A549 (cell line): ENCODE measurements at regions of chr17 and their contacts with region 1.

Region 1: DNA sequence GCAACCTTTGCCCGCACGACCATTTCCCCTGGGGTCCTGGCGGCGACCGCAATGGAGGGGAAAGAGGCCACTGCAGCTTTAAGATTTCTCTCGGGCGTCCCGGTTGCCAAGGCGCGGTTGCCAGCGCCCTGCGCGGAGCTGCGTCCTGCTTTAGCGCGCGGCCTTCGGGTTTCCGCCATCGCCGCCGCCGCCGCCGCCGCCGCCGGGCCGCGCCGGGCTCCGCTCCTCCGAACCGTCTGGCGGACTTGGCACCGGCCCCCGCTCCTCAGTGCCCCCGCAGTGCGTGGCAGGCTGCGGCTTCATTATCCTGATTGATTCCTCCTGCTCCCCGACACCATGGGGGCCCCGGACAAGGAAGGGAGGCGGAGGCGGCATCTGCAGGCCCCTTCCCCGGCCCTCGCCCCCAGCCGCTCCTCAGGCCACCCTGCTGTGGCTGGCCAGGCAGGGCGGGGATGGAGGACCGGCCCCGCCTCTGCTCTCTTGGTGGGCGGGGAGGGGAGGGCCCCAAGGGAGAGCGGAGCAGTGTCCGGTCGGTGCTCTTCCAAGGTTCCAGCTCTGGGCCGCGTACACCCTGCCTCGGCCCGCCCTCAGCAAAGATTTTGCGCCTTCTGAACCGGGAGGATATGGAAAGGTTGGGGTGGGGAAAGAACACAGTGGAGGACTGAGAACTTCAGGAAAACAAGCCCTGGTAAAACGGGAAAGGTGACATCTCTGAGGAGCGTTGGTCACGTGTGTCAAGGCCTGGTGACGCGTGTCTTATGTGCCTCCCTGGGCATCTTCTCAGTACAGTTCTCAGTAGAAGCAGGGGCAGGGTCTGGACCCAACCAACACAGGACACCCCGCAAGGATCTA is 34.0 kb downstream of the NEUROD2 start:
- DNase-seq: peak; percentile 81 to 95
- ATAC-seq: peak; percentile 91 to 96
- H3K4me3 ChIP-seq: peak overlapping the region; percentile 57
- H3K27ac ChIP-seq: peak overlapping the region; percentile 74 to 90
- H3K4me1 ChIP-seq: peaks cover 5% of the 10 kb centered on the region; the same call in 2 of the 3 replicates
- CTCF ChIP-seq: no peak
- EP300 ChIP-seq: no peak
- POLR2A ChIP-seq: peak; percentile 44
- RAD21 ChIP-seq: no peak

Region 2: DNA sequence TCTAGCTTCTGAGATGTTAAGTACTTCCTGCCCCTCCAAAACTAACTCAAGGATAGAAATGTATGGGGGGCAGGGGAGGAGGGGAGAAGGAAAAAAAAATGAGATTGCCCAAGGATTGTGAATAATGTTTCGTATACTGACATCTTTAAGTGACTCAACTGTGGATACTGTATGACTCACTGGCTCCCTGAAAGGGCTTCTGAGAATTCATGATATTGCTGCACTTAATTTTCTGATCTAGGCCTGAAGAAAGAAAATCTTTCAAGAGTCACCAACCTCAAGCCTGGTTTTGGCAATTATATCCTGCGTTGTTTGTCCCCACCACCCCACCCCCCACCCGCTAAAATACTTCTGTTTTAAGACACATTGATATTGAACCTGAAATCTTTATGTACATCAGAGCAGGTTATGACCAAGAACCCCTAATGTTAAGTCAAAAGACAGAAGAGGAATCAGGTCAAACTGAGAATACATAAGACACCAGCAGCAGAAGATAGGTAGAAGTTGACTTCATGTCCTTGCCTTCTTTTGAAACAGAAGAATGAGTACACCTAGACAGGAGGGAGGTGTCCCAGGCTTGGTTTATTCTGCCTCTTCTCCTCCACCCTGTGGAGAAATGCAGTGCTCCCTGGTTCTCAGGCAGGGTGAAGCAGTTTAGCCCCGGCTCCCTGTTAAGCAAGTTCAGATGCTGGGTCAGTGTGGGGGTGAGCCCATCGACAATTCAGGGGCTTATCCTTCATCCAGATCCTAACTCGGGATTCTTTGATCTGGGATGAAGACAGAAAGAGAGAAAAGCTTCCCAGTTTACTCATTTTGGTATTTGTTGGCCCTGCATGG is 168.9 kb before region 1 on chr17:
- CTCF ChIA-PET with region 1: no interaction called
- POLR2A ChIA-PET with region 1: no interaction called
- DNase-seq: peak; percentile 67 to 80
- ATAC-seq: peak; percentile 4 to 26; a peak in 1 of 6 replicates
- H3K4me3 ChIP-seq: no peak overlapping the region
- H3K27ac ChIP-seq: peak overlapping the region; percentile 58 to 81; a peak in 5 of 6 replicates
- H3K4me1 ChIP-seq: peaks cover 55% of the 10 kb centered on the region
- CTCF ChIP-seq: no peak
- EP300 ChIP-seq: 0 out of 5 replicates have a peak, but pooled peaks of 1 of the 2 experiments have one; percentile 22
- POLR2A ChIP-seq: no peak
- RAD21 ChIP-seq: no peak

Region 3: DNA sequence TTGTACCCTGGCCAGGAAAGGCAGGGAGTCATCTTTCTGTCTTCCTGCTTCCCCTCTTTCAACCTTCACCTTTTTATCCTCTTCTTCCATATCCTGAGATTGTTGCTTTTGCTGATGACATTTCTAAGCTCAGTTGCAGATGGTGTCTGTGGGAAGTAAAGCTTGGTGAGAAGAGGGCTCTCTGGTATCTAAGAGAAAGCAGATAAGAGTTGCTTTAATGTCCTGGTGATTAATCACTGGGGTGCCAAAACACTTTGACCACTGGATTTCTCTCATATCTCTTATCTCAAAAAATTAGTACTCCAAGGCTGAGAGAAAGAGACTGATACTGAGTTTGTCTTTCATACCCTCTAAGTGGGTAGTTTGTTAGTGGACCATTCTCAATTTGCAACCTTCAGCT is 37.2 kb before region 1 on chr17:
- CTCF ChIA-PET with region 1: no interaction called
- POLR2A ChIA-PET with region 1: no interaction called
- DNase-seq: no peak
- ATAC-seq: no peak
- H3K4me3 ChIP-seq: no peak overlapping the region
- H3K27ac ChIP-seq: no peak overlapping the region
- H3K4me1 ChIP-seq: no peaks in the 10 kb centered on the region
- CTCF ChIP-seq: no peak
- EP300 ChIP-seq: no peak
- POLR2A ChIP-seq: no peak
- RAD21 ChIP-seq: no peak

Region 4: GRCh38 chr17:39553341-39553945 is 20.2 kb before region 1 on chr17:
- CTCF ChIA-PET with region 1: interaction called, 145 read pairs
- POLR2A ChIA-PET with region 1: no interaction called
- DNase-seq: no peak
- ATAC-seq: peak in 1 of 2 experiments; percentile 37; a peak in 2 of 6 replicates
- H3K4me3 ChIP-seq: no peak overlapping the region
- H3K27ac ChIP-seq: no peak overlapping the region
- H3K4me1 ChIP-seq: no peaks in the 10 kb centered on the region
- CTCF ChIP-seq: no peak
- EP300 ChIP-seq: no peak
- POLR2A ChIP-seq: no peak
- RAD21 ChIP-seq: no peak

Region 5: DNA sequence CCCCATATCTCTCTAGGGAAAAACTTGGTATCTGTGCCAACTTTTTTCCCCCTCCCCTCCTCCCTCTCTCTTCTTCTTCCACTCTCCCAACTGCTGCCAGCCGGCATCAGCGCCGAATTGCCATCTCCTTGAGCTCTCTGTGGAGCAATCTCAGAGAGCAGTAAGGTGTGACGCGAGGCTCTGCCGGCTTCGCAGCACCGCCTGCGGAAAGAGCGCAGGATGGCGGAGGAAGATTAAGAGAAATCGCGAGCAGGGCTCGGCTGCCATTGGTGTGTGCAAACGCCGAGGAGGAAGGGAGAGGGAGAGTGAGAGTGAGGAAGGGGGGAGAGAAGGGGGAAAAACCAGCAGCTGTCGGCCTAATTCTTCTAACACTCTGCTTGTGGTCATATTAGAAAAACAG is 10.2 kb before region 1 on chr17:
- CTCF ChIA-PET with region 1: interaction called, 145 read pairs
- POLR2A ChIA-PET with region 1: no interaction called
- DNase-seq: no peak
- ATAC-seq: no peak
- H3K4me3 ChIP-seq: no peak overlapping the region
- H3K27ac ChIP-seq: no peak overlapping the region
- H3K4me1 ChIP-seq: no peaks in the 10 kb centered on the region
- CTCF ChIP-seq: no peak
- EP300 ChIP-seq: no peak
- POLR2A ChIP-seq: no peak
- RAD21 ChIP-seq: no peak

Region 6: GRCh38 chr17:39591958-39592954 is 18.6 kb after region 1 on chr17:
- CTCF ChIA-PET with region 1: interaction called, 13 read pairs
- POLR2A ChIA-PET with region 1: interaction called, 3 read pairs
- DNase-seq: peak in 1 of 2 experiments; percentile 64
- ATAC-seq: peak; percentile 48 to 58; a peak in 5 of 6 replicates
- H3K4me3 ChIP-seq: no peak overlapping the region
- H3K27ac ChIP-seq: no peak overlapping the region
- H3K4me1 ChIP-seq: no peaks in the 10 kb centered on the region; the same call in 2 of the 3 replicates
- CTCF ChIP-seq: no peak
- EP300 ChIP-seq: no peak
- POLR2A ChIP-seq: no peak
- RAD21 ChIP-seq: no peak

Region 7: GRCh38 chr17:39605492-39606433 is 32.1 kb after region 1 on chr17:
- CTCF ChIA-PET with region 1: interaction called, 14 read pairs
- POLR2A ChIA-PET with region 1: no interaction called
- DNase-seq: peak in 1 of 2 experiments; percentile 83
- ATAC-seq: peak; percentile 38 to 66
- H3K4me3 ChIP-seq: peak overlapping the region; percentile 30
- H3K27ac ChIP-seq: no peak overlapping the region
- H3K4me1 ChIP-seq: peaks cover 44% of the 10 kb centered on the region
- CTCF ChIP-seq: no peak
- EP300 ChIP-seq: no peak
- POLR2A ChIP-seq: no peak
- RAD21 ChIP-seq: no peak